ENCODE measurements at regions of chr2 and their contacts with region 1.

Region 1: DNA sequence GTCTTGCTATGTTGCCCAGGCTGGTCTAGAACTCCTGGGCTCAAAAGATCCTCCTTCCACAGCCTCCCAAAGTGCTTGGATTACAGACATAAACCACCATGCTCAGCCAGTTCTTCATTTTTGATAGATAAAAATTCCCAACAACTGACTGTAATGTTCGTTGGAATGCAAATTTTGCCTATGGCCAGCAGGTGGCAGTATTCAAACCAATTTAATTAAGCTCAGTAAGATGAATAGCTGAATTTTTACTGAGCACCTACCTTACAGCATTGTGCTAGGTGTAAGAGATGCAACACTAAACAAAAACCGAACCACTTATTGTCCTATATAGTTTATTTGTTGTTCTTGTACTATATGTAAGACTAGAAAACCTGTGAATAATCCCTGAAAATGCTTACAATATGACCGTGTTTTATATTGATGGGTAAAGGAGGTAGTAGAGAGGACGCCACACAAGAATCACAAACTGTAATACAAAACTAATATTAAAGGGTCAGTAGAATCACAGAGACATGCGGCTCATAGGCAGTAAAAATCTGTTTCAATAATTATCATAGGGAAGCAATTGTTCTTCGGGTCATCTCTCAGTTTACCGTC is 8.2 kb upstream of the TMEM182 start:
- DNase-seq: peak; percentile 38
- ATAC-seq: no peak
- H3K4me3 Mint-ChIP-seq: no peak overlapping the region
- H3K27ac Mint-ChIP-seq: no peak overlapping the region
- H3K4me1 Mint-ChIP-seq: no peaks in the 10 kb centered on the region
- H3K27me3 Mint-ChIP-seq: no peaks in the 10 kb centered on the region

Region 2: DNA sequence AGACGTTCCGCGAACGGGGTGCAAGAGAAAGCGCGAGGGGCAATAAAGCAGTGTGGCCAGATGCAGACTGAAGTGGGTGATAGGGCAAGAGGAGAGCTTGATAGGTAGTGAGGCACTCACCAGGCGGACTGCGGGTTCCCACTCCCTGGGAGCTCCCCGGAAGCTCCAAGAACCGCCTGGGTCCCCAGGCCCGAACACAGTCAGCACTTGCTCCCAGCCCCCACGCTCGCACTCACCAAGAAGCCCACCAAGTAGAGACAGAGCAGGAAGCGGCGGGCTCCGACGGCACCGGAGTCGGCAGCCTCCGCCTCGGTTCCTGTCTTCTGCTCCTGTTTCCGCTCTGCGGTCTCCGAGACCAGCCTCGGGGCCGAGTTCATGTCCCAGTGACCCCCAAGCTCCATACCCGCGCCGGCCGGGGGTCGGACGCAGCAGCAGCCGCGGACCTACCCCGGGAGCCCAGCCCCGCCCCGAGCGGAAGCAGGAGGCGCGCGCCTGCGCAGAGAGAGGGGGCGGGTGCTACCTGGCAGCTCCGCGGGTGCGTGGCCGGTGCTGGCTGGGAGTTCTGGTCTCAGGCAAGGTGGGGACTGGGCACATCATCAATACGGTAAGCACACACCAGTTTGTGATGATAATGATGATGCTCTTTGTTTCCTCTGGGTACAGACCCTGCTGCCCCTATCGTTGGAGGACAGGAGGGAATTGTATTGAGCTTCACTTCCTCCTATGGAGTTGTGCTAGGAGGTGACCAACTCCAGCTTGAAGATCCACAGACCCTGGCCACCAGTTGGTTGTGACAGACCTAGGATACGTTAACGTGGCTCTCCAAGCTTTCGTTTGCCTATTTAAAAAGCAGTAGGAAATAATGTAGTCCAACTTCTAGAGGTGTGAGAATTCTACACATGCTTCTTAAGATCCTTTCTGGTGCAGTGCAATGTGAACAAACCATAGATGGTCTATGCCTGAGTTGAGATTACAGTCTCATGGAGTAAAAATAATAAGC is 17.0 kb before region 1 on chr2:
- CTCF ChIA-PET with region 1: interaction called, 61 read pairs
- POLR2A ChIA-PET with region 1: no interaction called
- intact Hi-C with region 1: no loop called
- DNase-seq: peak; percentile 91
- ATAC-seq: peak; percentile 94
- H3K4me3 Mint-ChIP-seq: peak overlapping the region; percentile 96
- H3K27ac Mint-ChIP-seq: peak overlapping the region; percentile 91
- H3K4me1 Mint-ChIP-seq: peaks cover 31% of the 10 kb centered on the region
- H3K27me3 Mint-ChIP-seq: no peaks in the 10 kb centered on the region

Region 3: DNA sequence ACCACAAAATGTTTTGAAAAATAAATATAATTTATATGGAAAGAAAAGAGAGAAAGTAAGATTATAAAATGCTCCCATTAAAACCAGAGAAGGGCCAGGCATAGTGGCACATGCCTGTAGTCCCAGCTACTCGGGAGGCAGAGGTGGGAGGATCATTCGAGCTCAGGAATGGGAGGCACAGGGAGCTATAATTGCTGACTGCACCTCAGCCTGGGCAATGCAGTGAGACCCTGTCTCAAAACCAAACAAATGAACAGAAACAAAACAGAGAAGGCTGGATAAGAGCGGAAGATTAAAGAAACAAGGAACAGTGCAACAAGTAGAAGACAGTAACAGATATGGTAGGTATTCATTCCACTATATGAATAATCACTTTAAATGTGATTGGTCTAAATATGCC is 10.4 kb before region 1 on chr2:
- CTCF ChIA-PET with region 1: interaction called, 61 read pairs
- POLR2A ChIA-PET with region 1: no interaction called
- intact Hi-C with region 1: no loop called
- DNase-seq: no peak
- ATAC-seq: no peak
- H3K4me3 Mint-ChIP-seq: no peak overlapping the region
- H3K27ac Mint-ChIP-seq: no peak overlapping the region
- H3K4me1 Mint-ChIP-seq: no peaks in the 10 kb centered on the region
- H3K27me3 Mint-ChIP-seq: no peaks in the 10 kb centered on the region

Region 4: DNA sequence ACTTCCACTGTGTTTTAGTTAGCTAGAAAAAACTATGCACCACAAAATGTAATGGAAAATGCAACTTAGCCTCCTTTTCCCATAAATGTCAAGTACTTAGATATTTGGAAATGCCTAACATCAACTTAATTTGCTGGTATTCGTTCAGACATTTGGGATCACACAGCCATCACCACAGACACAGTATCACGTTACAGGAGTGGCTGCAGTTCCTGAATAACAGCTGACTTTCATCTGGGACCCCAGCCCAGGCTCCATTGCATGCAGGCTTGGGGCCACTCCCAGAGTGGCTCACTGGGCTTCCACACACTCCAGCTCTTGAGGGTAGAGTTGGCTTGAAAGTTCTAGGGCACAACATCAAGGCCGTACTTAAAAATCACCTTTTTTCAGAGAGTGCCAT is 17.5 kb after region 1 on chr2:
- CTCF ChIA-PET with region 1: interaction called, 10 read pairs
- POLR2A ChIA-PET with region 1: no interaction called
- intact Hi-C with region 1: no loop called
- DNase-seq: no peak
- ATAC-seq: no peak
- H3K4me3 Mint-ChIP-seq: no peak overlapping the region
- H3K27ac Mint-ChIP-seq: no peak overlapping the region
- H3K4me1 Mint-ChIP-seq: no peaks in the 10 kb centered on the region
- H3K27me3 Mint-ChIP-seq: no peaks in the 10 kb centered on the region

Region 5: GRCh38 chr2:102782933-102783332 is 29.3 kb after region 1 on chr2:
- CTCF ChIA-PET with region 1: interaction called, 14 read pairs
- POLR2A ChIA-PET with region 1: no interaction called
- intact Hi-C with region 1: no loop called
- DNase-seq: no peak
- ATAC-seq: no peak
- H3K4me3 Mint-ChIP-seq: no peak overlapping the region
- H3K27ac Mint-ChIP-seq: no peak overlapping the region
- H3K4me1 Mint-ChIP-seq: no peaks in the 10 kb centered on the region
- H3K27me3 Mint-ChIP-seq: no peaks in the 10 kb centered on the region

Region 6: DNA sequence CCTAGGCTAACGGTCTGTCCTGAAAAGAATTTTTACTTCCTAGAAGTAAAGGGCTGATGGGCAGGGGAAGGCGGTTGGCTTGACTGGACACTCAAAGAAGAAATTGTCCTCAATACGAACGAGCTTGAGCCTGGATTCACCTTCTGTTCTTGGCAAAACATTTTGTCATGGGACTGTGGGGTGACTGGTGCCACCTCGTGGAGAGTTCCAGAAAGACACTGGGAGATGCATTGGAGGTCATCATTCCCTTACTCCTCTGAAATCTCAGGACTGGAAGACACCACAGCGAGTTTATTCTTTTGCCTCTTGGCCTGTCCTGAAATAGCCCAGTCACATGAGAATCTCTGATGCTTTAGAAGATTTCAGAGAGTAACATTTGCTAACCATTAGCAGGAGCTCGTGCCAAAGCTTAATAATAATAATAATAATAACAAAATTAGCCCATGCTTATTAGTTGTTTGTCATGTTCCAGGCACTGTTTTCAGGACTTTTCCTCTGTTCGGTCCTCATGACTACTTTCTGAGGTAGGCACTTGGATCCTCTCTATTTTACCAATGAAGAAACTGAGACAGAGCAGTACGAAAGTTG is 52.7 kb after region 1 on chr2:
- CTCF ChIA-PET with region 1: interaction called, 88 read pairs
- POLR2A ChIA-PET with region 1: interaction called, 3 read pairs
- intact Hi-C with region 1: loop called (anchors 1 to 2 kb)
- DNase-seq: peak; percentile 64
- ATAC-seq: no peak
- H3K4me3 Mint-ChIP-seq: no peak overlapping the region
- H3K27ac Mint-ChIP-seq: no peak overlapping the region
- H3K4me1 Mint-ChIP-seq: peaks cover 22% of the 10 kb centered on the region
- H3K27me3 Mint-ChIP-seq: no peaks in the 10 kb centered on the region